ENCODE measurements at regions of chr12 and their contacts with region 1.

Region 1: DNA sequence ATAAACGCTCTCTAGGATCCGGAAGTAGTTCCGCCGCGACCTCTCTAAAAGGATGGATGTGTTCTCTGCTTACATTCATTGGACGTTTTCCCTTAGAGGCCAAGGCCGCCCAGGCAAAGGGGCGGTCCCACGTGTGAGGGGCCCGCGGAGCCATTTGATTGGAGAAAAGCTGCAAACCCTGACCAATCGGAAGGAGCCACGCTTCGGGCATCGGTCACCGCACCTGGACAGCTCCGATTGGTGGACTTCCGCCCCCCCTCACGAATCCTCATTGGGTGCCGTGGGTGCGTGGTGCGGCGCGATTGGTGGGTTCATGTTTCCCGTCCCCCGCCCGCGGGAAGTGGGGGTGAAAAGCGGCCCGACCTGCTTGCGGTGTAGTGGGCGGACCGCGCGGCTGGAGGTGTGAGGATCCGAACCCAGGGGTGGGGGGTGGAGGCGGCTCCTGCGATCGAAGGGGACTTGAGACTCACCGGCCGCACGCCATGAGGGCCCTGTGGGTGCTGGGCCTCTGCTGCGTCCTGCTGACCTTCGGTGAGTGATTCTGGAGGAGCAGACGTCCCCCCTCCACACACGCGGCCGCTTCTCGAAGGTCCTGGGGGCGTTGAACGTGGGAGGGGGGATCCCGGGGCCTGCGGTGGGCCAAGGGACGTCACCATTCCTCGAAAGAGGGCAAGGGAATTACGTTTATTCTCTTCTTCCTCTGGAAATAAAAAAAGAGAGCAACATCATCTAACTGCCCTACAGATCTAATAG is at the start of gene HSP90B1:
- DNase-seq: peak; percentile 99 to 100
- H3K4me3 ChIP-seq: peak within 1 kb of the TSS; percentile 90
- H3K4me3 Mint-ChIP-seq: peak within 1 kb of the TSS; percentile 93
- H3K27ac Mint-ChIP-seq: peak within 1 kb of the TSS; percentile 98
- H3K4me1 ChIP-seq: peaks cover 9% of the 10 kb centered on the region; the same call in 1 of the 2 replicates
- H3K4me1 Mint-ChIP-seq: peaks cover 23% of the 10 kb centered on the region
- H3K27me3 ChIP-seq: no peaks in the 10 kb centered on the region
- H3K27me3 Mint-ChIP-seq: no peaks in the 10 kb centered on the region
- CTCF ChIP-seq: no peak
- total RNA-seq, gene HSP90B1: 845 and 857 TPM in 2 replicates

Region 2: GRCh38 chr12:103728323-103728722 is 201.9 kb before region 1 on chr12:
- CTCF ChIA-PET with region 1: no interaction called
- POLR2A ChIA-PET with region 1: no interaction called
- intact Hi-C with region 1: no loop called
- DNase-seq: no peak
- H3K4me3 ChIP-seq: no peak overlapping the region
- H3K4me3 Mint-ChIP-seq: no peak overlapping the region
- H3K27ac Mint-ChIP-seq: no peak overlapping the region
- H3K4me1 ChIP-seq: no peaks in the 10 kb centered on the region
- H3K4me1 Mint-ChIP-seq: no peaks in the 10 kb centered on the region
- H3K27me3 ChIP-seq: no peaks in the 10 kb centered on the region
- H3K27me3 Mint-ChIP-seq: peaks cover 3% of the 10 kb centered on the region
- CTCF ChIP-seq: no peak

Region 3: GRCh38 chr12:103840876-103841689 is 89.1 kb before region 1 on chr12 and contains the start of gene NT5DC3:
- CTCF ChIA-PET with region 1: no interaction called
- POLR2A ChIA-PET with region 1: interaction called, 14 read pairs
- intact Hi-C with region 1: loop called (anchors 1 kb)
- DNase-seq: peak; percentile 82 to 90
- H3K4me3 ChIP-seq: peak within 1 kb of the TSS; percentile 84
- H3K4me3 Mint-ChIP-seq: peak within 1 kb of the TSS; percentile 75
- H3K27ac Mint-ChIP-seq: peak within 1 kb of the TSS; percentile 75
- H3K4me1 ChIP-seq: peaks cover 33% of the 10 kb centered on the region
- H3K4me1 Mint-ChIP-seq: peaks cover 24% of the 10 kb centered on the region
- H3K27me3 ChIP-seq: no peaks in the 10 kb centered on the region
- H3K27me3 Mint-ChIP-seq: no peaks in the 10 kb centered on the region
- CTCF ChIP-seq: no peak
- total RNA-seq, gene NT5DC3: 9.5 and 10.7 TPM in 2 replicates

Region 4: DNA sequence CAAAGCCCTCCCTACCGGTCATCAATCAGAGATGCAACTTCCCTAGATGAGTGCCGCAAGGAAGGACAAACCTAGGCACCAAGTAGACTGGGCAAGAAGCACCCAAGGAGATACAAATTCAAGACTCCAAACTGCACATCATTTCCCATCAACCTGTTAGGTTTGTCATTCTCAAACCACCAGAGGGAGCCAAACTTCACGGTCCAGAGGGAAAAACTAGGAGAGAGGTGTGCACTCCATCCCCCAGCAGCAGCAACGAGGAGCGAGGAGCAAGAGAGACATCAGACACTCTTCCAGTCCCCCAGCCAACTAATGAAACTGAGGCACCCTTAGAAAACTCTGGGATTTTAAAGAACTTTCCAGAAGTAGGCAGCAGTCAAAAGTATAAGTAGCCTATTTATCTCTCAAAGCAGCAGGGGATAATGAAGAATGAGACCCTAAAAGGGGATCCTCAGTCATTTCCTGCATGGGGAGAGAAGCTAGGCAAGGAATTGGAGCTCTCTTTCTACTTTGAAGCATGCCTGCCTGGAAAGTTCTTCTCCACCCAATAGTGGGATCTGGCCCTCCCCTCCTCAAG is 52.2 kb before region 1 on chr12:
- CTCF ChIA-PET with region 1: interaction called, 5 read pairs
- POLR2A ChIA-PET with region 1: no interaction called
- intact Hi-C with region 1: loop called (anchors 1 kb)
- DNase-seq: peak; percentile 67 to 73
- H3K4me3 ChIP-seq: no peak overlapping the region
- H3K4me3 Mint-ChIP-seq: no peak overlapping the region
- H3K27ac Mint-ChIP-seq: no peak overlapping the region
- H3K4me1 ChIP-seq: no peaks in the 10 kb centered on the region
- H3K4me1 Mint-ChIP-seq: no peaks in the 10 kb centered on the region
- H3K27me3 ChIP-seq: no peaks in the 10 kb centered on the region
- H3K27me3 Mint-ChIP-seq: peaks cover 2% of the 10 kb centered on the region
- CTCF ChIP-seq: peak; percentile 76 to 82

Region 5: GRCh38 chr12:103884316-103884715 is 45.9 kb before region 1 on chr12:
- CTCF ChIA-PET with region 1: interaction called, 5 read pairs
- POLR2A ChIA-PET with region 1: interaction called, 8 read pairs
- intact Hi-C with region 1: loop called (anchors 1 kb)
- DNase-seq: peak in 1 of 2 experiments; percentile 25
- H3K4me3 ChIP-seq: no peak overlapping the region
- H3K4me3 Mint-ChIP-seq: no peak overlapping the region
- H3K27ac Mint-ChIP-seq: no peak overlapping the region
- H3K4me1 ChIP-seq: no peaks in the 10 kb centered on the region
- H3K4me1 Mint-ChIP-seq: no peaks in the 10 kb centered on the region
- H3K27me3 ChIP-seq: no peaks in the 10 kb centered on the region
- H3K27me3 Mint-ChIP-seq: peaks cover 2% of the 10 kb centered on the region
- CTCF ChIP-seq: peak in 1 of 2 experiments; percentile 45

Region 6: GRCh38 chr12:103901518-103902173 is 28.6 kb before region 1 on chr12:
- CTCF ChIA-PET with region 1: no interaction called
- POLR2A ChIA-PET with region 1: no interaction called
- intact Hi-C with region 1: no loop called
- DNase-seq: no peak
- H3K4me3 ChIP-seq: no peak overlapping the region
- H3K4me3 Mint-ChIP-seq: no peak overlapping the region
- H3K27ac Mint-ChIP-seq: no peak overlapping the region
- H3K4me1 ChIP-seq: no peaks in the 10 kb centered on the region
- H3K4me1 Mint-ChIP-seq: no peaks in the 10 kb centered on the region
- H3K27me3 ChIP-seq: peaks cover 2% of the 10 kb centered on the region; the same call in 1 of the 2 replicates
- H3K27me3 Mint-ChIP-seq: peaks cover 13% of the 10 kb centered on the region
- CTCF ChIP-seq: no peak

Region 7: DNA sequence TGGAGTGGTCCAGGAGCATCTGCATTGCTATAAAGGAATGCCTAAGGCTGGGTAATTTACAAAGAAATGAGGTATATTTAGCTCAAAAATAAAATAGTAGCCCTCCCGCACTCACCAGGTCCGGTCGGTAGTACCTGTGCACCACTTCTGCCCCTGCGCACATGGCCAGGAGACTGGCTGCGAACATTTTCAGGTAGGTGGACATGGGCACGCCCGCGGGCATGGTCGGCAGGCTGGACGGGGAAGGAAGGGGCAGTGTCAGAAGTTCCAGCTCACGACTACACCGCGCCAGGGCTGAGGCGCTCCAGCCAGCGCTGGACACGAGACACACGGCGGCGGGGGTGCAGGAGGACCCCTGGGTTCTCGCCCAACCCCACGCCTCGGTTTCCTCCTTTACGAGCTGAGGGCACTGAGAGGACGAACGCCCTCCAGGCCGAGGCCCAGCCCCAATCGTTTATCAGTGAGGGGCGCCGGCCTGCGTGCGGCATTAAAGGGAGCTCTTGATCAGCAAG is 26.4 kb after region 1 on chr12:
- CTCF ChIA-PET with region 1: no interaction called
- POLR2A ChIA-PET with region 1: interaction called, 14 read pairs
- intact Hi-C with region 1: loop called (anchors 1 kb)
- DNase-seq: peak; percentile 45 to 47
- H3K4me3 ChIP-seq: peak overlapping the region; percentile 97
- H3K4me3 Mint-ChIP-seq: peak overlapping the region; percentile 79
- H3K27ac Mint-ChIP-seq: peak overlapping the region; percentile 97
- H3K4me1 ChIP-seq: peaks cover 4% of the 10 kb centered on the region
- H3K4me1 Mint-ChIP-seq: peaks cover 18% of the 10 kb centered on the region
- H3K27me3 ChIP-seq: no peaks in the 10 kb centered on the region
- H3K27me3 Mint-ChIP-seq: no peaks in the 10 kb centered on the region
- CTCF ChIP-seq: no peak

Region 8: GRCh38 chr12:103965590-103966504 is 35.6 kb after region 1 on chr12 and contains the start of gene TDG:
- CTCF ChIA-PET with region 1: interaction called, 5 read pairs
- POLR2A ChIA-PET with region 1: interaction called, 41 read pairs
- intact Hi-C with region 1: loop called (anchors 2 kb)
- DNase-seq: peak; percentile 96 to 99
- H3K4me3 ChIP-seq: peak within 1 kb of the TSS; percentile 63
- H3K4me3 Mint-ChIP-seq: peak within 1 kb of the TSS; percentile 94
- H3K27ac Mint-ChIP-seq: peak within 1 kb of the TSS; percentile 99
- H3K4me1 ChIP-seq: no peaks in the 10 kb centered on the region; the same call in 1 of the 2 replicates
- H3K4me1 Mint-ChIP-seq: peaks cover 11% of the 10 kb centered on the region
- H3K27me3 ChIP-seq: no peaks in the 10 kb centered on the region
- H3K27me3 Mint-ChIP-seq: no peaks in the 10 kb centered on the region
- CTCF ChIP-seq: no peak
- total RNA-seq, gene TDG: 28.4 and 29.5 TPM in 2 replicates

Measured in Caco-2 (cell line).